SK-N-SH (cell line): ENCODE measurements at regions of chr3 and their contacts with region 1.

Region 1: GRCh38 chr3:160163229-160163878 is 61.9 kb upstream of the C3orf80 start:
- DNase-seq: peak; percentile 46
- H3K4me3 ChIP-seq: no peak overlapping the region
- H3K27ac ChIP-seq: peak overlapping the region in 1 of 2 experiments; percentile 36; a peak in 2 of 4 replicates
- H3K4me1 ChIP-seq: peaks cover 0 to 8% of the 10 kb centered on the region in 2 experiments; a peak in 2 of 4 replicates
- H3K27me3 ChIP-seq: no peaks in the 10 kb centered on the region
- CTCF ChIP-seq: peak; percentile 68
- EP300 ChIP-seq: no peak
- RAD21 ChIP-seq: peak; percentile 73

Region 2: DNA sequence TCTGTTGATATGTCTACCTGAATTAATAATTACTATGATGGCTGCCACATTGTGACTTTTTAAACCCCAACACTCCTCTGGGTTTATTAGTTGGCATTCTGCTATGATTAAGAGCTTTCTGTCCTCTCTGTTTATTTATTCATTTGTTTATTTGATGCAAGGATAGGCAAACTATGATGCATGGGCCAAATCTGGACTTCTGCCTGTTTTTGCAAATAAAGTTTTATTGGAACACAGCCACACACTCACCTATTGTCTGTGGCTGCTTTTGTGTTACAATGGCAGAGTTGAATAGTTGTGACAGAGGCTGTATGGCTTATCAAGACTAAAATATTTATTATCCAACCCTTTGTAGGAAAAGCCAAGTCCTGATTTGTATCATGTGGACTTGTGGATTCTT is 13.6 kb after region 1 on chr3:
- CTCF ChIA-PET with region 1: interaction called, 19 read pairs
- POLR2A ChIA-PET with region 1: no interaction called
- DNase-seq: no peak
- H3K4me3 ChIP-seq: no peak overlapping the region
- H3K27ac ChIP-seq: no peak overlapping the region
- H3K4me1 ChIP-seq: peaks cover 0 to 5% of the 10 kb centered on the region in 2 experiments; a peak in 1 of 4 replicates
- H3K27me3 ChIP-seq: no peaks in the 10 kb centered on the region
- CTCF ChIP-seq: no peak
- EP300 ChIP-seq: no peak
- RAD21 ChIP-seq: no peak

Region 3: GRCh38 chr3:160187288-160187687 is 23.9 kb after region 1 on chr3:
- CTCF ChIA-PET with region 1: interaction called, 12 read pairs
- POLR2A ChIA-PET with region 1: no interaction called
- DNase-seq: no peak
- H3K4me3 ChIP-seq: no peak overlapping the region
- H3K27ac ChIP-seq: no peak overlapping the region
- H3K4me1 ChIP-seq: peaks cover 0 to 14% of the 10 kb centered on the region in 2 experiments; a peak in 2 of 4 replicates
- H3K27me3 ChIP-seq: no peaks in the 10 kb centered on the region
- CTCF ChIP-seq: no peak
- EP300 ChIP-seq: no peak
- RAD21 ChIP-seq: no peak

Region 4: DNA sequence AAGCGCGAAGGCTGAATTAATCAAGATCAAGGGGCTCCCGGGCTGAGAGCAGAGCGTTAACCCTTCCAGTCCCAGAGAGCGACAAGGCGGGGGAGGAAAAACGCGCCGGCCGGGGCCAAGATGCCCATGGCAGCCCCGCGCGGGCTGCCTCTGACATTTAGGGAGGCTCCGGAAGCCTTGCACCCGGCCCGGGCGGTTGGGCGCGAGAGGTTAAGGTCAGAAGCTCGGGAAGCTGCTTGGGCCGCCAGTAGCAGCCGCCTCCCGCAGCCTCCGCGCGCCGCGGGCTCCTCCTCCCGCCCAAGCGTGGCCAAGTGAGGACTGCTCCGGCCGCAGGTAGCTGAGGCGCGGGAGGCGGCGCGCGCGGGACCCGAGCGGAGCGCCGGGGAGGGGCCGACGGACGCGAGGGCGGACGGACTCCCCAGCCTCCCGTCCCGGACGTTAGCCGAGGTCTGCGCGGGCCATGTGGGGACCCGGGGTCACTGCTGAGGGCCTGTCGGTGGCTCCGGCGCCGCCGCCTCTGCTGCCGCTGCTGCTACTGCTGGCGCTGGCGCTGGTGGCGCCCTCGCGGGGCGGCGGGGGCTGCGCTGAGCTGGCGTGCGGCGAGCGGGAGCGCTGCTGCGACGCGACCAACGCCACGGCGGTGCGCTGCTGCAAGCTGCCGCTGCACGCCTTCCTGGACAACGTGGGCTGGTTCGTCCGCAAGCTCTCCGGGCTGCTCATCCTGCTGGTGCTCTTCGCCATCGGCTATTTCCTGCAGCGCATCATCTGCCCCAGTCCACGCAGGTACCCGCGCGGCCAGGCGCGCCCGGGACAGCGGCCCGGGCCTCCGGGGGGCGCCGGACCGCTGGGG is 62.0 kb after region 1 on chr3 and contains the start of gene C3orf80:
- CTCF ChIA-PET with region 1: interaction called, 15 read pairs
- POLR2A ChIA-PET with region 1: no interaction called
- DNase-seq: peak; percentile 86
- H3K4me3 ChIP-seq: peak within 1 kb of the TSS; percentile 54 to 63
- H3K27ac ChIP-seq: no peak within 1 kb of the TSS
- H3K4me1 ChIP-seq: peaks cover 0 to 12% of the 10 kb centered on the region in 2 experiments; a peak in 1 of 4 replicates
- H3K27me3 ChIP-seq: peaks cover 23% of the 10 kb centered on the region
- CTCF ChIP-seq: peak; percentile 26; the same call in 1 of the 2 replicates
- EP300 ChIP-seq: no peak
- RAD21 ChIP-seq: no peak
- polyA plus RNA-seq, gene C3orf80: 0.02 TPM in 1 of 2 replicates, not detected in the other

Region 5: DNA sequence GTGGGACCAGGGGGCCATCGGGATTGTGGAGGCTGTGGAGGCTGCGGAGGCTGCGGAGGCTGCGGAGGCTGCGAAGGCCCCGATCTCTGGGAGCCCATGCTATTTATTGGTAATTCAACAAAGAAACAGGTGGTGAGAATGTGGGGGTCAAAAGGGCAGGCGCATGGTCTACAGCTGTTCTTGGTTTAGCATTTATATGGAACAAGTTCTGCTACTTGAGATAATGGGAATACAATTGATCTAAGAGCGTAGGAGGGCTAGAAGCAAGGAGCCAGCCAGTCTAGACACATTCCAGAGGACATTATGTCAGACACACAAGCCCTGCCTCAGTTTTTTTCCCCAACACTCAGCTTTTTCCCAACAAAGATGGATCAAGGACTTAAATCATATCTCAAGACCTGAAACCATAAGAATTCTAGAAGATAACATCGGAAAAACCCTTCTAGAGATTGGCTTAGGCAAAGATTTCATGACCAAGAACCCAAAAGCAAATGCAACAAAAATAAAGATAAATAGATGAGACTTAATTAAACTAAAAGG is 82.0 kb after region 1 on chr3:
- CTCF ChIA-PET with region 1: no interaction called
- POLR2A ChIA-PET with region 1: no interaction called
- DNase-seq: no peak
- H3K4me3 ChIP-seq: no peak overlapping the region
- H3K27ac ChIP-seq: no peak overlapping the region
- H3K4me1 ChIP-seq: no peaks in the 10 kb centered on the region
- H3K27me3 ChIP-seq: no peaks in the 10 kb centered on the region
- CTCF ChIP-seq: no peak
- EP300 ChIP-seq: no peak
- RAD21 ChIP-seq: no peak

Region 6: GRCh38 chr3:160343132-160343531 is 179.8 kb after region 1 on chr3:
- CTCF ChIA-PET with region 1: interaction called, 16 read pairs
- POLR2A ChIA-PET with region 1: no interaction called
- DNase-seq: peak; percentile 5
- H3K4me3 ChIP-seq: no peak overlapping the region
- H3K27ac ChIP-seq: no peak overlapping the region
- H3K4me1 ChIP-seq: no peaks in the 10 kb centered on the region
- H3K27me3 ChIP-seq: no peaks in the 10 kb centered on the region
- CTCF ChIP-seq: peak; percentile 64
- EP300 ChIP-seq: no peak
- RAD21 ChIP-seq: peak; percentile 72

Region 7: GRCh38 chr3:160355826-160356225 is 192.5 kb after region 1 on chr3:
- CTCF ChIA-PET with region 1: interaction called, 12 read pairs
- POLR2A ChIA-PET with region 1: no interaction called
- DNase-seq: peak; percentile 3
- H3K4me3 ChIP-seq: no peak overlapping the region
- H3K27ac ChIP-seq: no peak overlapping the region
- H3K4me1 ChIP-seq: no peaks in the 10 kb centered on the region
- H3K27me3 ChIP-seq: no peaks in the 10 kb centered on the region
- CTCF ChIP-seq: no peak
- EP300 ChIP-seq: no peak
- RAD21 ChIP-seq: no peak

Region 8: DNA sequence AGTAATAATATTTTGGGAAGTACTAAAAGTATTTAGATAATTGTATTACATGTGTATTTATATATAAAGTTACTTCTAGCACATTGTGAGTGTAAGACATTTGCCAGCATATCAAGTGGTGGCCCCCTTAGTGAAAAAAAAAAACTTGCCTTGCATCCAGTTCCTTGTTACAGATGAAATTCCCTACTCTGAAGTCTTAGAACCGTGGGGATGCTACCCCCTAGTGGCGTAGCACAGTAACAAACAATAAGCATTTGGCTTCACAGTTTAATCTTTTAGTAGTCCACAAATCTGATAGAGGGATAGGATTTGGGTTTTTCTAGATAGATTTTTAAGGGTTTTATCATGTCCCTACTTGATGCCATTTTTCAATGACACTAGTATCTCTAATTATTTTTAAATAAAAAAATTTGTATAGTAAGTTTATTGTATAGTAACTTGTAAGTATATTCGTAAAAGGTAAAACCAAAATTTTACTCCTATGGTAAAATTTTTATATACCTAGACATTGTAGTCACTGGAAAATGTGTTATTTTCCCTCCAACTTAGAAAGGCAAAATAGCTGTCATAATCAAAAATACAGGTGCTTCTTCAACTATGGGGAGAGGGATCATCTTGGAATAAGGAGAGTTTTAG is 250.4 kb after region 1 on chr3:
- CTCF ChIA-PET with region 1: interaction called, 29 read pairs
- POLR2A ChIA-PET with region 1: no interaction called
- DNase-seq: peak; percentile 64
- H3K4me3 ChIP-seq: no peak overlapping the region; a peak in 1 of 4 replicates
- H3K27ac ChIP-seq: peak overlapping the region in 1 of 2 experiments; percentile 44; a peak in 2 of 4 replicates
- H3K4me1 ChIP-seq: peaks cover 0 to 4% of the 10 kb centered on the region in 2 experiments; a peak in 2 of 4 replicates
- H3K27me3 ChIP-seq: no peaks in the 10 kb centered on the region
- CTCF ChIP-seq: peak; percentile 90
- EP300 ChIP-seq: no peak
- RAD21 ChIP-seq: peak; percentile 89

Region 9: DNA sequence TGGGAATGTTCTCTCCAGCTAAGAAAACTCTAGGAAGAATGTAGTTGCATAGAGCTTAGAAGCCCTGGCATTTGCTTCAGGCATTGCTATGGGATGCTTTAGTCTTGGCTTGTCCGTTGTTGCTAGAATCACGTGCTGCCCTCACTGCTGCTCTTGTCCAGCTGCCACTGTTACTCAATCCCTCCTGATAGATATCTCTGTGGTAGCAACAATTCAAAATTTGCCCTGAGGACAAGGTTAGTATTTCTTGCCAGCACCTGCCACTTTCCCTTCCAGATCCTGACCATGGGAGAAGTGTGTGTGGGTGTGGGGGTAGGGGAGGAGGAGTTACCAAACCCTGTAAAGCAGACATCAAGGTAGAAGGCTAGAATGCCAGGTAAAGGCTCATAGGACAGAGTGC is 706.5 kb after region 1 on chr3:
- CTCF ChIA-PET with region 1: no interaction called
- POLR2A ChIA-PET with region 1: no interaction called
- DNase-seq: peak; percentile 20
- H3K4me3 ChIP-seq: no peak overlapping the region
- H3K27ac ChIP-seq: no peak overlapping the region
- H3K4me1 ChIP-seq: peaks cover 0 to 5% of the 10 kb centered on the region in 2 experiments; a peak in 1 of 4 replicates
- H3K27me3 ChIP-seq: no peaks in the 10 kb centered on the region
- CTCF ChIP-seq: no peak
- EP300 ChIP-seq: peak in 1 of 2 experiments; percentile 32; a peak in 1 of 4 replicates
- RAD21 ChIP-seq: no peak